Psoas muscle (tissue), 8 donors: ENCODE measurements at regions of chr3 and their contacts with region 1.

Region 1: GRCh38 chr3:168165390-168166269 is 69.9 kb upstream of the GOLIM4 start:
- DNase-seq: peak in 1 of 2 donors; percentile 25
- ATAC-seq: peak; percentile 58 to 95 (median 76)
- H3K4me3 ChIP-seq: peak overlapping the region; percentile 39
- H3K27ac ChIP-seq: no peak overlapping the region
- H3K4me1 ChIP-seq: peaks cover 5% of the 10 kb centered on the region
- H3K27me3 ChIP-seq: no peaks in the 10 kb centered on the region
- CTCF ChIP-seq: peak; percentile 78

Region 2: GRCh38 chr3:167929968-167930367 is 235.7 kb before region 1 on chr3:
- intact Hi-C with region 1: loop called in 1 of 2 experiments (anchors 10 kb)
- DNase-seq: no peak
- ATAC-seq: no peak
- H3K4me3 ChIP-seq: no peak overlapping the region
- H3K27ac ChIP-seq: no peak overlapping the region
- H3K4me1 ChIP-seq: no peaks in the 10 kb centered on the region
- H3K27me3 ChIP-seq: no peaks in the 10 kb centered on the region
- CTCF ChIP-seq: no peak

Region 3: DNA sequence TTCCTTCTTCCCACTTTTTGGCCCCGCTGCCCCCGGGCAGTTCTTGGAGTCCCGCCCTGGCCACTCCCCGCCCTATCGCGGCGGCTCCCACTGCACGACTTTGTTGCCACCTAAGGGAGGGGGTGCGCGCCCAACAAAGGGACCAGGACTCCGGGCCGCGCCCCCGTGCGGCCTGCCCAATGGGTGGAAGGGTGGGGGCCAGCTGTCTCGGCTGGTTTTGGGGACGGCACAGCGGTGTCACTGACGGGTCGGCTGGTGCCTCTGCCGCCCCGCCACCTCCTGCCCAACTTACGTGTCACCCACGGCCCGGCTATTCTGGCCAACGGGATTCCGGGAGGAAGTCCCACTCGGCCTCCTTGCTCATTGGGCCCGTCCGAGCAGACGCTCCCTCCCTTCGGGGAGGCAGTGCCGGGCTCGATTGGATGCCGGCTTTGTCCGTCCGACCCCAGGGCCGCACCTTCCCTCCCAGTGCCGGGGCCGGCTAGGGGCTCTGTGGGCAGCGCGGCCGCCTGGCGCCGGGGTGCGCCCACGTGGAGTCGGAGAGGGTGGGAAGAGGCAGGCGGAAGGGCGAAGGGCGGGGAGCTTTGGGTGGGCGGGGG is 69.9 kb before region 1 on chr3 and contains the start of gene GOLIM4:
- intact Hi-C with region 1: loop called (anchors 2 to 5 kb)
- DNase-seq: peak; percentile 96 to 97
- ATAC-seq: peak; percentile 94 to 95 (median 94)
- H3K4me3 ChIP-seq: peak within 1 kb of the TSS; percentile 92
- H3K27ac ChIP-seq: peak within 1 kb of the TSS; percentile 95
- H3K4me1 ChIP-seq: peaks cover 30% of the 10 kb centered on the region
- H3K27me3 ChIP-seq: no peaks in the 10 kb centered on the region
- CTCF ChIP-seq: peak; percentile 6
- total RNA-seq, gene GOLIM4: 13.4 to 34.1 (median 25.2) TPM